ENCODE measurements at regions of chr6 and their contacts with region 1.

Region 1: GRCh38 chr6:89462503-89462902 is 29.6 kb downstream of the ANKRD6 start:
- DNase-seq: no peak
- H3K4me3 ChIP-seq: no peak overlapping the region
- CTCF ChIP-seq: no peak
- POLR2A ChIP-seq: no peak

Region 2: DNA sequence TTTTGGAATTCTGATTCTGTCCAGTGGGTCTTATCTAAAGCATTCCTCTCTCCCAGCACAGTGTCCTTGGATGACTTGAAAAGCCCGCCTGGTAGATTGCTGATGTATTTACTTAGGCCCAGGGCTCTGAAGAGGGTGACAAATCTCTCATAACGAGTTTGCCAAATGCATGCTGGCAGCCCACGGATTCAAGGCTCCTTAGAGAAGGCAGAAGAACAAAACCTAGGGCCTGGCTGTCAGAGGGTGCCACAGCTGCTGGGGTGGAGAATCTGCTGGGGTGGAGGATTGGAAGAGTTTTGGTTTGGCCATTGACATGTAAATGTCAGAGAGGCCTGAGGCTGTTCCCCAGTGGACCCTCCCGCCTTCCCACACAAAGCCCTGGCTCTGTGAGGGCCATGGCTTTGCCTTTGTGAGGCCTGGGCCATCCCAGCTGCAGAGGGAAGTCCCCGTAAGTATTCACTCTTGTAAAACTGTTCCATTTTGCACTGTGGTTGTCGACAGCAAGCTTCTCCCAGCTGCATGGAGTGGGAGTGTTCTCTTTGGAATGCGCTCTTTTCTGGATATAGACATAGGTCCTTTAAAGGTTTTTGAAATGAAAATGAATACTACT is 20.7 kb after region 1 on chr6:
- intact Hi-C with region 1: loop called (anchors 2 kb)
- DNase-seq: no peak
- H3K4me3 ChIP-seq: no peak overlapping the region
- CTCF ChIP-seq: no peak
- POLR2A ChIP-seq: no peak